CD4-positive, alpha-beta T cell (primary cell): ENCODE measurements at regions of chr1 and their contacts with region 1.

Region 1: DNA sequence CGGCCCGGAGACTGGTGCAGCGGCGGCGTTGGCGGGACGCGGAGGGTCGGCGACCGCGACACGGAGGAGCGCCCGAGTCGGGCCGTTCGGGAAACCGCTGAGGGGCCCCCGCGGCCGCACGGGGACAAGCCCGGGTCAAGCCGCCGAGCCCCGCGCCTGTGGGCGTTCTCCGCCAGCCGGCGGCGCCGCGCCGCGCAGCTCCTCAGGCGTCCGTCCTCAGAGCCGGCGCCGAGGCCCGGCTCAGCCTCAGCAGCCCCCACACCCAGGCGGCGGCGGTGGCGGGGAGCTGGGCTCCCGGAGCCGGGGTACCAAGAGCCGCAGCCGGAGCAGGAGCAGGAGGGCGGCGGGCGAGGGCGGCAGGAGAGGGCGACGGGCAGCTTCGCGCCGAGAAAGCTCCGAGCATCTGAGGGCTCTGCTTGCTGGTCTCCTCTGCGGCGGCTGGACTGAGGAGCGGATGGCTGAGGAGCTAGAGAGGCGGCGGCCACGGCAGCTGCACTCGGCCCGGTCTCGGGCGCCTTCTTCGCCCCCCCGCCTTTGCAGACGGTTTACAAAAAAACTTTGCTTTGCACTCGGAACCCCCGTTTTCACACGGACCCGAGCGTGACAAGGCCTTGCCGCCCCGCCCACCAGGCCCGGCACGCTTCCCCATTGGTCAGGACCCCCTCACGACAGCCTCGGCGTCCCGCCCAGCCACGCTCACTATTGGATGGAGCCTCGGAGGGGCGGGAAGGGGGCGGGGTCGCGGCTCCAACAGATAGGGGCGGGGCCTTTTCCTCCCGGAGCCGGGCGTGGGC is at the start of gene SLC30A1:
- DNase-seq: peak; percentile 98 to 100 (median 99)
- ATAC-seq: peak; percentile 92
- H3K4me3 ChIP-seq: peak within 1 kb of the TSS; percentile 96
- H3K4me3 Mint-ChIP-seq: peak within 1 kb of the TSS; percentile 97
- H3K27ac ChIP-seq: peak within 1 kb of the TSS; percentile 41 to 78
- H3K27ac Mint-ChIP-seq: peak within 1 kb of the TSS; percentile 86
- H3K4me1 ChIP-seq: peaks cover 19% of the 10 kb centered on the region
- H3K4me1 Mint-ChIP-seq: peaks cover 49% of the 10 kb centered on the region
- H3K27me3 ChIP-seq: no peaks in the 10 kb centered on the region
- H3K27me3 Mint-ChIP-seq: no peaks in the 10 kb centered on the region
- CTCF ChIP-seq: no peak
- total RNA-seq, gene SLC30A1: 6.0 TPM

Region 2: GRCh38 chr1:211323156-211324063 is 255.4 kb before region 1 on chr1:
- CTCF ChIA-PET with region 1: interaction called, 3 read pairs
- POLR2A ChIA-PET with region 1: no interaction called
- intact Hi-C with region 1: loop called (anchors 5 kb)
- DNase-seq: peak; percentile 46 to 86 (median 60)
- ATAC-seq: peak; percentile 71
- H3K4me3 ChIP-seq: no peak overlapping the region
- H3K4me3 Mint-ChIP-seq: peak overlapping the region; percentile 55
- H3K27ac ChIP-seq: no peak overlapping the region
- H3K27ac Mint-ChIP-seq: no peak overlapping the region
- H3K4me1 ChIP-seq: peaks cover 29% of the 10 kb centered on the region
- H3K4me1 Mint-ChIP-seq: peaks cover 47% of the 10 kb centered on the region
- H3K27me3 ChIP-seq: no peaks in the 10 kb centered on the region
- H3K27me3 Mint-ChIP-seq: no peaks in the 10 kb centered on the region
- CTCF ChIP-seq: peak; percentile 93

Region 3: DNA sequence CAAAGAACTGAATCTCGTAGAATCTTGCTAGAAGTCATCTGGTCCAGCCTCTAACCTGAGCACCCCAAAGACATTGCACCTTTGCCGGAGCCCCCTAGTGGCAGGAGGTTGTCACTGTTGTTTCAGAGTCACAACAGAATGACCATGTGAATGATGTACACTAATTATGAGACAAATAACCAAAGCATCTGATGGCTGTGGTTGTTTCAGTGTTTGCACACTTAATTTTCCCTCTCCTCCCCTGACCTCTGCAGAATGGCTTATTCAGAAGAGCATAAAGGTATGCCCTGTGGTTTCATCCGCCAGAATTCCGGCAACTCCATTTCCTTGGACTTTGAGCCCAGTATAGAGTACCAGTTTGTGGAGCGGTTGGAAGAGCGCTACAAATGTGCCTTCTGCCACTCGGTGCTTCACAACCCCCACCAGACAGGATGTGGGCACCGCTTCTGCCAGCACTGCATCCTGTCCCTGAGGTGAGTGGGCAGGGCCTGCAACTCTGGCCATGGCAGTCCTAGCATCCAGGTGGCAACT is 225.8 kb before region 1 on chr1:
- CTCF ChIA-PET with region 1: no interaction called
- POLR2A ChIA-PET with region 1: no interaction called
- intact Hi-C with region 1: no loop called
- DNase-seq: peak in 13 of 14 experiments; percentile 32 to 87 (median 56)
- ATAC-seq: peak; percentile 85
- H3K4me3 ChIP-seq: peak overlapping the region; percentile 28
- H3K4me3 Mint-ChIP-seq: peak overlapping the region; percentile 86
- H3K27ac ChIP-seq: peak overlapping the region; percentile 11 to 15
- H3K27ac Mint-ChIP-seq: peak overlapping the region; percentile 87
- H3K4me1 ChIP-seq: peaks cover 52% of the 10 kb centered on the region
- H3K4me1 Mint-ChIP-seq: peaks cover 71% of the 10 kb centered on the region
- H3K27me3 ChIP-seq: no peaks in the 10 kb centered on the region
- H3K27me3 Mint-ChIP-seq: no peaks in the 10 kb centered on the region
- CTCF ChIP-seq: peak; percentile 58

Region 4: DNA sequence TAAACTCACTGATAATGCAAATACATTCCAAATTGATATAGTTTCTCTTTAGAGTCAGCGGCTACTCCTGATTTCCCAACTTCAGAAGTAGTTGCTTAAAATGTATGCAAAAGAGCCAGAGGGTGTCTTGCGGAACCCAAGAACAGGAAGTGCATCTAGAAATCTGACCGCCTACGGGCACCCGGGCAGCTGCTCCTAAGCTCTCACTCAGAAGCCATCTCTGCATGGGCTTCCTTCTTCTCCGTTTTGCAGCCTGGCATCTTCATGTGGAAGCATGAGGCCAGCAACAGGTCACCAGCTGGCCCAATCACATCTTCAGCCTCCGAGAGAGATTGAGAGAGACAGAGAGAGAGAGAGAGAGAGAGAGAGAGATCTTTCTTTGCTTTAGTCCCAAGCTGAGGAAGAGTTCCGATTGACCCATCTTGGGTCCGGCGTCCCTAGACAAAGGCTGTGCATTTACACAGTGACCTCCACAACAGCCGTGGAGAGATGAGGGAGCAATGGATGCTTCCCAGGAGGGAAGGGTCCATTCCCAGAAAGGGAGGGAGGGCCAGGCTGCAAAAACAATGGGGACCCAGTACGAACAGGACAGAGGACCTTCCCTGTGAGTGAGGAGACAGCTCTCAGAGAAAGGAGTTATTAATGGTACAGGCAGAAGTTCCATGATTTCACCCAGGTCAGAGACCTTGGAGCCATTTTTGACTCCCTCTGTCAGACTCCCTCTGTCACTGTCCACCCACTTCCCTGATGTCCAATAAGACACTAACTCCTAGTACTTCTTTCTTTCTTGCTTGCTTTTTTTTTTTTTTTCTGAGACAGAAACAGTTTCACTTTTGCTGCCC is 28.3 kb after region 1 on chr1:
- CTCF ChIA-PET with region 1: interaction called, 5 read pairs
- POLR2A ChIA-PET with region 1: interaction called, 16 read pairs
- intact Hi-C with region 1: no loop called
- DNase-seq: peak in 7 of 14 experiments; percentile 8 to 70 (median 26)
- ATAC-seq: peak; percentile 64
- H3K4me3 ChIP-seq: peak overlapping the region; percentile 48
- H3K4me3 Mint-ChIP-seq: peak overlapping the region; percentile 84
- H3K27ac ChIP-seq: peak overlapping the region in 1 of 2 donors; percentile 48
- H3K27ac Mint-ChIP-seq: peak overlapping the region; percentile 61
- H3K4me1 ChIP-seq: peaks cover 13% of the 10 kb centered on the region
- H3K4me1 Mint-ChIP-seq: peaks cover 28% of the 10 kb centered on the region
- H3K27me3 ChIP-seq: no peaks in the 10 kb centered on the region
- H3K27me3 Mint-ChIP-seq: peaks cover 7% of the 10 kb centered on the region
- CTCF ChIP-seq: no peak

Region 5: GRCh38 chr1:211675230-211676105 is 96.6 kb after region 1 on chr1 and contains the start of gene NEK2:
- CTCF ChIA-PET with region 1: interaction called, 4 read pairs
- POLR2A ChIA-PET with region 1: interaction called, 3 read pairs
- intact Hi-C with region 1: loop called in 1 of 2 experiments (anchors 5 kb)
- DNase-seq: peak; percentile 70 to 93 (median 79)
- ATAC-seq: peak; percentile 94
- H3K4me3 ChIP-seq: peak within 1 kb of the TSS; percentile 67
- H3K4me3 Mint-ChIP-seq: peak within 1 kb of the TSS; percentile 92
- H3K27ac ChIP-seq: no peak within 1 kb of the TSS
- H3K27ac Mint-ChIP-seq: peak within 1 kb of the TSS; percentile 73
- H3K4me1 ChIP-seq: peaks cover 15% of the 10 kb centered on the region
- H3K4me1 Mint-ChIP-seq: peaks cover 7% of the 10 kb centered on the region
- H3K27me3 ChIP-seq: no peaks in the 10 kb centered on the region
- H3K27me3 Mint-ChIP-seq: no peaks in the 10 kb centered on the region
- CTCF ChIP-seq: no peak
- total RNA-seq, gene NEK2: not detected

Region 6: DNA sequence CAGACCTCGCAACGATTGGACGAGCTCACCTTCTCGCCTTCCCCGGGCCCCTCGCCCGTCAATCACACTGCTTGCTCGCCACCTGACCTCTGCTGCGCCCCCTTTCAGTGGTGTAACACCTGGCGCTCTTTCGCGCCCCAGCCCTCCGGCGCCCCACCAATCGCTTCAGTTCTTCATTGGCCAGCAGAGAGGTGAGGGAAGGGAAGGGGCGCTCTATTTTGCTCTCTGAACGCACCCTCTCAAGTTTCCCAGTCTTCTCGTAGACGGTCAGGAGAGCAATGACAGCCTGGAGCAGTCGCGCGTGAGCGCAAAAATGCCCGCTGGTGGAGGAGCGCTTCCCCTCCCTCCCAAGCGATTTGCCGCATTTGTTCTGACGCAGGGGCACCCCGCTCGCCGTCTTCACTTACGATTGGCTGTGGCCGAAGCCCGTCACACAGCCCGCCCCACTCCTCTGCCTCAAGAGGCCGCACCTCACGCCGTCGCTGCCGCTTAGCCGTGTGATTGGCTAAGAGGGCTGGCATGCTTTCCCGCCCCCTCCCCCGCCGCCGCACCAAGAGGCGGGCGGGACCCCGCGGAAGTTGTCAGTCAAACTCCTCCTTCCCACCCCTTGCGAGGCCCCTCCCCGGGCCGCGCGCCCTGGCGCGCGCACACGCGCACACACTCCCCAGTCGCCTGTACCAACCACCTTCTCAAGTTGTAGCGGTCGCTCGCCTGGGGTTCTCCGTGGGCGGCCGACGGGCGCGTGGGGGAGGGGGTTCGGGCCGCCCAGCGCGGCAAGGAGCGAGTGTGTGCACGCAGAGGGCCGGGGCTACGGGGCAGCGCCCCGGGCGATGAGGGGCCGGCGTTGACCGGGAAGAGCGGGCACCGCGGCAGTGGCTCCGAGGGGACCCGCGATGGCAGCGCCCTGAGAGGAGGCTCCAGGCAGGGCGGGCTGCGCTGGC is 706.2 kb after region 1 on chr1 and contains the start of gene PPP2R5A:
- CTCF ChIA-PET with region 1: no interaction called
- POLR2A ChIA-PET with region 1: interaction called, 8 read pairs
- intact Hi-C with region 1: loop called in 1 of 2 experiments (anchors 5 kb)
- DNase-seq: peak; percentile 96 to 100 (median 98)
- ATAC-seq: peak; percentile 86
- H3K4me3 ChIP-seq: peak within 1 kb of the TSS; percentile 99
- H3K4me3 Mint-ChIP-seq: peak within 1 kb of the TSS; percentile 100
- H3K27ac ChIP-seq: peak within 1 kb of the TSS; percentile 90 to 98
- H3K27ac Mint-ChIP-seq: peak within 1 kb of the TSS; percentile 92
- H3K4me1 ChIP-seq: peaks cover 22% of the 10 kb centered on the region
- H3K4me1 Mint-ChIP-seq: peaks cover 37% of the 10 kb centered on the region
- H3K27me3 ChIP-seq: no peaks in the 10 kb centered on the region
- H3K27me3 Mint-ChIP-seq: peaks cover 4% of the 10 kb centered on the region
- CTCF ChIP-seq: peak; percentile 50
- total RNA-seq, gene PPP2R5A: 44.3 to 46.2 TPM

Region 7: GRCh38 chr1:213015099-213016050 is 1436.5 kb after region 1 on chr1 and contains the start of gene ANGEL2:
- CTCF ChIA-PET with region 1: no interaction called
- POLR2A ChIA-PET with region 1: no interaction called
- intact Hi-C with region 1: loop called in 1 of 2 experiments (anchors 5 kb)
- DNase-seq: peak; percentile 88 to 99 (median 94)
- ATAC-seq: peak; percentile 98
- H3K4me3 ChIP-seq: peak within 1 kb of the TSS; percentile 72
- H3K4me3 Mint-ChIP-seq: peak within 1 kb of the TSS; percentile 99
- H3K27ac ChIP-seq: peak within 1 kb of the TSS; percentile 75 to 86
- H3K27ac Mint-ChIP-seq: peak within 1 kb of the TSS; percentile 96
- H3K4me1 ChIP-seq: peaks cover 12% of the 10 kb centered on the region
- H3K4me1 Mint-ChIP-seq: peaks cover 44% of the 10 kb centered on the region
- H3K27me3 ChIP-seq: no peaks in the 10 kb centered on the region
- H3K27me3 Mint-ChIP-seq: no peaks in the 10 kb centered on the region
- CTCF ChIP-seq: no peak
- total RNA-seq, gene ANGEL2: 53.0 to 56.2 TPM